ENCODE measurements at regions of chr1 and their contacts with region 1.

Region 1: GRCh38 chr1:198771563-198772153 is 132.8 kb downstream of the PTPRC start:
- DNase-seq: peak; percentile 70
- H3K4me3 Mint-ChIP-seq: no peak overlapping the region
- H3K27ac Mint-ChIP-seq: no peak overlapping the region
- H3K4me1 Mint-ChIP-seq: peaks cover 4% of the 10 kb centered on the region
- H3K27me3 Mint-ChIP-seq: no peaks in the 10 kb centered on the region
- CTCF ChIP-seq: peak; percentile 89

Region 2: GRCh38 chr1:199046618-199047017 is 275.0 kb after region 1 on chr1:
- CTCF ChIA-PET with region 1: interaction called, 3 read pairs
- POLR2A ChIA-PET with region 1: no interaction called
- intact Hi-C with region 1: loop called (anchors 1 kb)
- DNase-seq: no peak
- H3K4me3 Mint-ChIP-seq: no peak overlapping the region
- H3K27ac Mint-ChIP-seq: no peak overlapping the region
- H3K4me1 Mint-ChIP-seq: no peaks in the 10 kb centered on the region
- H3K27me3 Mint-ChIP-seq: no peaks in the 10 kb centered on the region
- CTCF ChIP-seq: no peak

Region 3: GRCh38 chr1:199113265-199113869 is 341.7 kb after region 1 on chr1:
- CTCF ChIA-PET with region 1: interaction called, 37 read pairs
- POLR2A ChIA-PET with region 1: interaction called, 3 read pairs
- intact Hi-C with region 1: loop called (anchors 1 kb)
- DNase-seq: peak; percentile 70
- H3K4me3 Mint-ChIP-seq: no peak overlapping the region
- H3K27ac Mint-ChIP-seq: no peak overlapping the region
- H3K4me1 Mint-ChIP-seq: no peaks in the 10 kb centered on the region
- H3K27me3 Mint-ChIP-seq: no peaks in the 10 kb centered on the region
- CTCF ChIP-seq: peak; percentile 82

Region 4: GRCh38 chr1:199243423-199244061 is 471.9 kb after region 1 on chr1:
- CTCF ChIA-PET with region 1: interaction called, 12 read pairs
- POLR2A ChIA-PET with region 1: no interaction called
- intact Hi-C with region 1: loop called (anchors 1 kb)
- DNase-seq: peak; percentile 71
- H3K4me3 Mint-ChIP-seq: no peak overlapping the region
- H3K27ac Mint-ChIP-seq: no peak overlapping the region
- H3K4me1 Mint-ChIP-seq: peaks cover 6% of the 10 kb centered on the region
- H3K27me3 Mint-ChIP-seq: no peaks in the 10 kb centered on the region
- CTCF ChIP-seq: peak; percentile 90

Region 5: GRCh38 chr1:199422198-199422597 is 650.5 kb after region 1 on chr1:
- CTCF ChIA-PET with region 1: interaction called, 8 read pairs
- POLR2A ChIA-PET with region 1: no interaction called
- intact Hi-C with region 1: loop called (anchors 1 kb)
- DNase-seq: peak; percentile 75
- H3K4me3 Mint-ChIP-seq: no peak overlapping the region
- H3K27ac Mint-ChIP-seq: no peak overlapping the region
- H3K4me1 Mint-ChIP-seq: no peaks in the 10 kb centered on the region
- H3K27me3 Mint-ChIP-seq: no peaks in the 10 kb centered on the region
- CTCF ChIP-seq: peak; percentile 56

Region 6: DNA sequence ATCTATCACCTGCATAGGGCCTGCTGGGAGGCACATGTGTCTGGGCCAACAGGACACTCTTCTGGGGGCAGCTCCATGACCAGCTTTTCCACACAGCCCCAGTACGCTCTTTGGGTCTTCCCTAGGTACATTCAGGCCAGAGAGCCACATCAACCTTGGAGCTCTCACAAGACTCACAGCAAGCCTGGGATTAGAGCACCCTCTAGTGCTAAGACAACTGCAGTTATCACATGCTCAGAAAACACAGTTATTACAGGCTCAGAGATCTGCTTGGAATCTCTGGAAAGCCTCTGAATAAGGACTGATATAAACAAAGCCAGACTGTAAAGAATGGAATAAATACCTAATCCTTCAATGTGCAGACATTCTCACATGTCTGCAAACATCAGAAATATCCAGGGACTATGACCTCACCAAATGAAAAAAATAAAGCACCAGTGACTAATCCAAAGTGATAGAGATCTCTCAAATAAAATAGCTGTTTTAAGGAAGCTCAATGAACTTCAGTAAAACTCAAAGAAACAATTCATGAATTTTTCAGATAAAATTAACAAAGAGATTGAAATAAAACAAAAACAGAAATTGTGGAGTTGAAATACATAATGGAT is 692.0 kb after region 1 on chr1:
- CTCF ChIA-PET with region 1: interaction called, 4 read pairs
- POLR2A ChIA-PET with region 1: no interaction called
- intact Hi-C with region 1: loop called (anchors 1 kb)
- DNase-seq: peak; percentile 80
- H3K4me3 Mint-ChIP-seq: no peak overlapping the region
- H3K27ac Mint-ChIP-seq: no peak overlapping the region
- H3K4me1 Mint-ChIP-seq: no peaks in the 10 kb centered on the region
- H3K27me3 Mint-ChIP-seq: no peaks in the 10 kb centered on the region
- CTCF ChIP-seq: peak; percentile 79

Region 7: DNA sequence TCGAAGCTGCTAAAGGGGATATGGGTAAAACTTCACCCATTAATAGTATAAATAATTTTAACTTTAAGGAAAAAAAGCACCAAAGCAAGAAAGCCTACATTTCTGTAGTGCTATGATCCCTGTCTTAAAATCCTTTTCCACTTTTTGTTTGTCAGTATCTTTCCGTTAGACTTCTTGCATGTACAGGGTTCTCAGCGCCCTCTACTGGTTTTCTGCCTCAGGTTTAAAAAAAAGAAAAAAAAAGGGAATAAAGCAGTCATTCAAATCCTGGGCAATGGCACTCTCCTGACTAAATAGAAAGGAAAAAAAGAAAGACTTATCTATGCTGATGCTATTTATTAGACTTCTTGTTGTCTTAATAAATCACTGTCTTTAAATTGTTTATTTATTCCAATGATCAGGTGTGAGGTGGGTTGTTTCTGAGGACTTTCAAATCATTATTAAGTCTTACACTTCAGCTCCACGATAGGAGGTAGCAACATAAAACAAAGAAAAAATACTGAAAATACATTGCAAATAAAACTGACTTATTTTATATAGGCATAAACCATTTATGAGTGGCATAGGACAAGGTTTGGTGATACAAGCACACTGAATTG is 780.4 kb after region 1 on chr1:
- CTCF ChIA-PET with region 1: interaction called, 6 read pairs
- POLR2A ChIA-PET with region 1: no interaction called
- intact Hi-C with region 1: loop called (anchors 1 kb)
- DNase-seq: peak; percentile 74
- H3K4me3 Mint-ChIP-seq: no peak overlapping the region
- H3K27ac Mint-ChIP-seq: no peak overlapping the region
- H3K4me1 Mint-ChIP-seq: no peaks in the 10 kb centered on the region
- H3K27me3 Mint-ChIP-seq: no peaks in the 10 kb centered on the region
- CTCF ChIP-seq: peak; percentile 96